Activated B cell treated with CpG ODN at 0.5 μM for 24 hours (primary cell): ENCODE measurements at regions of chr1 and their contacts with region 1.

Region 1: GRCh38 chr1:38173157-38173831 is 126.7 kb upstream of the POU3F1 start:
- DNase-seq: no peak
- ATAC-seq: peak; percentile 80
- H3K4me3 Mint-ChIP-seq: peak overlapping the region; percentile 68
- H3K27ac Mint-ChIP-seq: peak overlapping the region; percentile 93
- H3K4me1 Mint-ChIP-seq: peaks cover 37% of the 10 kb centered on the region
- H3K27me3 Mint-ChIP-seq: no peaks in the 10 kb centered on the region
- CTCF ChIP-seq: no peak

Region 2: DNA sequence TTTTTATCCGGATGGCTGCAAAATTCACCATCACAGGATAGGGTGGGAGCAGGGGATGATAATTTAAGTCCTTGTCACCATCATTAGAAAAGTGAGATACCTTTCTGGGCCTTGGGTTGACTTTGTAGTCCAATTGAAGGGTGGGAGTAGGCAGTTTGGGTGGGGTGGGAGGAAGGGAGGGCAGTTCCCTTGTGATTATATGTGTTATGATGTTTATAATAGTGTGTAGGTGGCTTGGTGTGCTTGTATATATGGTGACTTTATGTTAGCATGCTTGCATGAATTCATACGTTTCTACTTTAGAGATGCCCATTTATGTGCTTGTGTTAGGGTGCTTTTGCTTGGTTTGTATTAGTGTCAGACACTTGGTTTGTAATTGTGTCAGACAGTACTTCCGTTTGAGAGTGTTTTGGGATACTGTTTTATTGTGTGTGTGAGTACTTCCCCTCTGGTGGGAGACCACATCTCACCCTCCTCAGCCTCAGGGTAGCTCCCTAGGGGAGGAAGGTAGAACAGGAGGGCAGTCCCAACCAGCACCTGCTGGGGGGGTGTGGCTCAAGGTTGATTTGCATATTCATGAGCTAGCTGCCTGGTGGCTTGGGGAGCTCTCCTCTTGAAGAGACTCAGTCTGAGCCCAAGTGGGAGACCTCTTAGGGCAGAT is 120.4 kb before region 1 on chr1:
- CTCF ChIA-PET with region 1: no interaction called
- POLR2A ChIA-PET with region 1: interaction called, 4 read pairs
- intact Hi-C with region 1: loop called (anchors 5 kb)
- DNase-seq: peak; percentile 47
- ATAC-seq: peak; percentile 92
- H3K4me3 Mint-ChIP-seq: peak overlapping the region; percentile 26
- H3K27ac Mint-ChIP-seq: peak overlapping the region; percentile 63
- H3K4me1 Mint-ChIP-seq: peaks cover 35% of the 10 kb centered on the region
- H3K27me3 Mint-ChIP-seq: no peaks in the 10 kb centered on the region
- CTCF ChIP-seq: no peak

Region 3: GRCh38 chr1:38191461-38191860 is 18.2 kb after region 1 on chr1:
- CTCF ChIA-PET with region 1: no interaction called
- POLR2A ChIA-PET with region 1: interaction called, 5 read pairs
- intact Hi-C with region 1: loop called (anchors 1 kb)
- DNase-seq: no peak
- ATAC-seq: no peak
- H3K4me3 Mint-ChIP-seq: no peak overlapping the region
- H3K27ac Mint-ChIP-seq: peak overlapping the region; percentile 25
- H3K4me1 Mint-ChIP-seq: peaks cover 10% of the 10 kb centered on the region
- H3K27me3 Mint-ChIP-seq: peaks cover 4% of the 10 kb centered on the region
- CTCF ChIP-seq: no peak

Region 4: DNA sequence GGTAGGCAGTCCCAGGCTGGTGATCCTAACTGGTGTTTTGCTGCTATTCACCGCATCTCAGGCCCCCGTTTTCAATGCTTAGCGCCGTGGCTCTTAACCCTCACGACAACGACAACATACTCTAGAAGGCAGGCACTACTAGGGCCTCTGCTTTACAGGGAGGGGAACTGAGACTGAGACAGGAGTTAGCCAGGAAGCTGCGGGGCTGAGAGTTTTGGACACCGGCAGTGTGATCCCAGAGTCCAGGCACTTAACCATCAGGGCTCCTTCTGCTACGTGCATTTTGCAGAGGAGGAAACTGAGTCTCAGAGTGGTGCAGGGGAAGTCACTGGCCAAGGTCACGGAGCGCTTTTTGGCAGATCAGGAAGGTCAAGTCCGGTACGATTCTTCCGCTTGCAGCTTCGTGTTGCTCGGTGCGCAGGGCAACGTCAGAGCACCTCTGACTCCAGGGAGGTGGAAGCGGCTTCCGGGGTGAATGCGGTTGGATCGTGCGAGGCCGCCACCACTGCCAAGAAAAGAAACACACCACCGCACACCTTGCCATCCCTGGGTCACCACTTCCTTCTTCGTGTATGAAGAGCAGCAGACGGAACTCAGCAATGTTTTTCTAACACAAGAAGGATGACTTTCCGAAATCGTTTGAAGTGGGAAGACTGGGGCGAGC is 386.0 kb after region 1 on chr1:
- CTCF ChIA-PET with region 1: no interaction called
- POLR2A ChIA-PET with region 1: interaction called, 3 read pairs
- intact Hi-C with region 1: loop called (anchors 2 kb)
- DNase-seq: peak; percentile 65
- ATAC-seq: peak; percentile 78
- H3K4me3 Mint-ChIP-seq: peak overlapping the region; percentile 85
- H3K27ac Mint-ChIP-seq: peak overlapping the region; percentile 93
- H3K4me1 Mint-ChIP-seq: peaks cover 64% of the 10 kb centered on the region
- H3K27me3 Mint-ChIP-seq: no peaks in the 10 kb centered on the region
- CTCF ChIP-seq: no peak